ENCODE measurements at regions of chr7 and their contacts with region 1.

Region 1: GRCh38 chr7:44057849-44058763 is 7.3 kb downstream of the PGAM2 start:
- H3K4me3 ChIP-seq: no peak overlapping the region
- H3K27ac ChIP-seq: no peak overlapping the region
- H3K4me1 ChIP-seq: no peaks in the 10 kb centered on the region
- CTCF ChIP-seq: no peak

Region 2: GRCh38 chr7:43944286-43944685 is 113.8 kb before region 1 on chr7:
- CTCF ChIA-PET with region 1: no interaction called
- POLR2A ChIA-PET with region 1: no interaction called
- H3K4me3 ChIP-seq: no peak overlapping the region
- H3K27ac ChIP-seq: no peak overlapping the region
- H3K4me1 ChIP-seq: no peaks in the 10 kb centered on the region
- CTCF ChIP-seq: no peak

Region 3: GRCh38 chr7:43960933-43961332 is 97.2 kb before region 1 on chr7:
- CTCF ChIA-PET with region 1: no interaction called
- POLR2A ChIA-PET with region 1: no interaction called
- H3K4me3 ChIP-seq: no peak overlapping the region
- H3K27ac ChIP-seq: no peak overlapping the region
- H3K4me1 ChIP-seq: no peaks in the 10 kb centered on the region
- CTCF ChIP-seq: no peak

Region 4: DNA sequence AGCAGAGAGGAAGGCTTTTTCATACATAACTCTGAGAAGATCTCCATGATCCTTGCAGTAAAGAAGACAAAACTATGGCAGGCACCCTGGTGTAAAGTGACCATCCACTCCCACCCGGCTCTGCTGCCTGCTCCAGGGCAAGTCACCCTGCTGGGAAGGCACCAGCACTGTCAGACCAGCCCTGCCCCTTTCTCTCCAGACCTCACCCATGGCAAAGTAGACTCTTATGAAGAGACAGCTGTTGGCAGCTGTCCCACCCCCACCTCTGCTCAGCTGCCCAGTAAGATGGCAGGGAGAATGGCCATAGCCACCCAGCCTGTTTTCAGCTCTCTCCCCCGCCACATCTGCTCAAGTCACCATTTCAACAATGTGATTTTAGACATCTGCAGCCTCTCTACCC is 681.9 kb after region 1 on chr7:
- CTCF ChIA-PET with region 1: no interaction called
- POLR2A ChIA-PET with region 1: interaction called, 12 read pairs
- H3K4me3 ChIP-seq: no peak overlapping the region
- H3K27ac ChIP-seq: no peak overlapping the region
- H3K4me1 ChIP-seq: no peaks in the 10 kb centered on the region
- CTCF ChIP-seq: no peak